Dorsolateral prefrontal cortex (tissue), 120 donors: ENCODE measurements at regions of chr1 and their contacts with region 1.

Region 1: GRCh38 chr1:99707535-99708142 is 58.8 kb downstream of the FRRS1 start:
- DNase-seq: peak in 9 of 10 donors; percentile 26 to 90 (median 65)
- H3K4me3 ChIP-seq: no peak overlapping the region
- H3K27ac ChIP-seq: no peak overlapping the region
- H3K27me3 ChIP-seq: no peaks in the 10 kb centered on the region
- CTCF ChIP-seq: peak; percentile 76 to 98 (median 89)

Region 2: DNA sequence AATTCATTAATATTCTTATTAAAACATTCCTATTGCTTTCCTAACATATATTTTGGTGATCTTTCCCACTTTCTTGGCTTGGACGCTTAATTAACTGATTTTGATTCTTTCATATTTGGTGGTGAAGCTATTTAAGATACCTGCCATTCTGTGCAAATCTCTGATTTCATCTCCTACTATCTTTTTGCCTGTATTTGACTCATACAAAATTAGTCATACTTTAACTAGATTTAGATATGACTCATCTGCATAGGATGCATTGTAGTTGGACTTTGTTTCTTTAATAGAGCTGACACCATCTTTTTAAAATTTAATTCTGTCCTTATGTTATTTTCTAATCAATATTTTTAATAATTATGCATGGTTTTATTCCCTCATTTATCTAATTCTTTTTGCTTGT is 537.1 kb before region 1 on chr1:
- intact Hi-C with region 1: loop called in 1 of 2 experiments (anchors 10 kb)
- DNase-seq: no peak
- H3K4me3 ChIP-seq: no peak overlapping the region
- H3K27ac ChIP-seq: no peak overlapping the region
- H3K27me3 ChIP-seq: no peaks in the 10 kb centered on the region
- CTCF ChIP-seq: no peak